HEK293 (cell line): ENCODE measurements at regions of chr5 and their contacts with region 1.

Region 1: GRCh38 chr5:36279054-36279698 is 22.5 kb downstream of the RANBP3L start:
- H3K4me3 ChIP-seq: no peak overlapping the region
- H3K27ac ChIP-seq: no peak overlapping the region
- H3K4me1 ChIP-seq: peaks cover 8% of the 10 kb centered on the region
- CTCF ChIP-seq: no peak

Region 2: DNA sequence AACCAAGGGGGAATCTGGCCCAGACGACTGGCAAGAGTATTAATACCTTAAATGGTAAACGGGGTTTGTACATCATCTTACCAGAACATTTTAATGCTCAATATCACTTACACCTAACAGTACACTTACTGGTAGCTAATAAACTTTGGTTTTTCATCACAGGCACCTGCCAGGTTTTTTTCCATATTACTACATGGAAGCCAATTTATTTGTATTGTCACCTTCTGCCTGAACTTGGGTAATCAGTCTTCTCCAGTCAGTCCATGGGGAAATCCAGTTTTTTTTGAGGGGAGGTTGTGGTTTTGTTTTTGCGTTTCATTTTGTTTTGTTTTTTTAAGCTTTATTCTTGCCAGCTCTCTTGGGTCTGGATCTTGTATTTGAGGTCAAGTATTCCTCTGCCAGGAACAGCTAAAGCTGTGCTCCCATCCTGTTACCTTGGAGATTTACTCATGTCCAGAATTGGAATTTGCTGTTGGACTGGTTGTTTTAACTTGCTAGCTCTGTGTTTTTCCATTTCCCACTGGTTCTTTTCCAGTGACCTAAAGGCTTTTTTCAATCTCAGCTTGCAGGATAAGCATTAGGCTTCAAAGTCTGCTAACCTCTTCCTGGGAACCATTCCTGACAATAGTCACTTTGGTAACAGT is 26.3 kb before region 1 on chr5:
- CTCF ChIA-PET with region 1: no interaction called
- POLR2A ChIA-PET with region 1: no interaction called
- H3K4me3 ChIP-seq: no peak overlapping the region
- H3K27ac ChIP-seq: no peak overlapping the region
- H3K4me1 ChIP-seq: 0 out of 2 replicates have a peak, but pooled peaks cover 6% of the 10 kb centered on the region
- CTCF ChIP-seq: no peak

Region 3: DNA sequence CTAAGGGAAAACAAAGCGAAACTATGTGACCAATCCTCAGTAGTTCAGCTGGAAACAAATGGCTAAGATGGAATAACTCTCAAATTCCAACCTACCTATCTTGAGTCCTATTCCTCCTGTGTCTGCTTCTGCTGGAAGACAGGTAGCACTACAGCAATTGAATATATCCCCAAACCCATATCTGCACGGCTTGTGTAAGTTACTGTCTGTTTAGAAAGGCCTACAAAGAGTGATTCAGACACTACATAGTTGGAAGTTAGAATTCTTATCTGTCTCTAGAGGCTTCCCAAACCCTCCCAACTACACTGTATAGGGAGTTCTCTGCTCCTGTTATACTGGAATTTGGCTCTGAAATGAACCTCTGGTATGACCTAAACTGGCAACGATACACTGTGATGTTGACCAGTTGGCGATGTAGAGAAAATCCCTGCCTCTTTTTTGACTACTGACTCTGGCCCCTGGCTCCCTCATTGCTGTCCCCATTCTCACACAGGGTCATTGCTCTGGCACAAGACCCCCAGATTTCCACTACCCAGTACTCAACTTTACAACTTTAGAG is 14.9 kb before region 1 on chr5:
- CTCF ChIA-PET with region 1: interaction called, 22 read pairs
- POLR2A ChIA-PET with region 1: no interaction called
- H3K4me3 ChIP-seq: no peak overlapping the region
- H3K27ac ChIP-seq: no peak overlapping the region
- H3K4me1 ChIP-seq: no peaks in the 10 kb centered on the region
- CTCF ChIP-seq: no peak

Region 4: GRCh38 chr5:36478646-36479317 is 199.6 kb after region 1 on chr5:
- CTCF ChIA-PET with region 1: no interaction called
- POLR2A ChIA-PET with region 1: no interaction called
- H3K4me3 ChIP-seq: no peak overlapping the region
- H3K27ac ChIP-seq: no peak overlapping the region
- H3K4me1 ChIP-seq: no peaks in the 10 kb centered on the region
- CTCF ChIP-seq: no peak